A549 (cell line): ENCODE measurements at regions of chr4 and their contacts with region 1.

Region 1: GRCh38 chr4:38034986-38035882 is 75.0 kb downstream of the PTTG2 start:
- DNase-seq: peak; percentile 35 to 45
- ATAC-seq: peak in 1 of 2 experiments; percentile 54; a peak in 1 of 6 replicates
- H3K4me3 ChIP-seq: no peak overlapping the region
- H3K27ac ChIP-seq: no peak overlapping the region
- H3K4me1 ChIP-seq: no peaks in the 10 kb centered on the region
- CTCF ChIP-seq: peak; percentile 59
- EP300 ChIP-seq: no peak
- POLR2A ChIP-seq: no peak
- RAD21 ChIP-seq: peak; percentile 63 to 66

Region 2: GRCh38 chr4:37463033-37463856 is 572.0 kb before region 1 on chr4:
- CTCF ChIA-PET with region 1: no interaction called
- POLR2A ChIA-PET with region 1: no interaction called
- DNase-seq: no peak
- ATAC-seq: no peak
- H3K4me3 ChIP-seq: no peak overlapping the region
- H3K27ac ChIP-seq: no peak overlapping the region
- H3K4me1 ChIP-seq: no peaks in the 10 kb centered on the region
- CTCF ChIP-seq: no peak
- EP300 ChIP-seq: no peak
- POLR2A ChIP-seq: no peak
- RAD21 ChIP-seq: no peak

Region 3: DNA sequence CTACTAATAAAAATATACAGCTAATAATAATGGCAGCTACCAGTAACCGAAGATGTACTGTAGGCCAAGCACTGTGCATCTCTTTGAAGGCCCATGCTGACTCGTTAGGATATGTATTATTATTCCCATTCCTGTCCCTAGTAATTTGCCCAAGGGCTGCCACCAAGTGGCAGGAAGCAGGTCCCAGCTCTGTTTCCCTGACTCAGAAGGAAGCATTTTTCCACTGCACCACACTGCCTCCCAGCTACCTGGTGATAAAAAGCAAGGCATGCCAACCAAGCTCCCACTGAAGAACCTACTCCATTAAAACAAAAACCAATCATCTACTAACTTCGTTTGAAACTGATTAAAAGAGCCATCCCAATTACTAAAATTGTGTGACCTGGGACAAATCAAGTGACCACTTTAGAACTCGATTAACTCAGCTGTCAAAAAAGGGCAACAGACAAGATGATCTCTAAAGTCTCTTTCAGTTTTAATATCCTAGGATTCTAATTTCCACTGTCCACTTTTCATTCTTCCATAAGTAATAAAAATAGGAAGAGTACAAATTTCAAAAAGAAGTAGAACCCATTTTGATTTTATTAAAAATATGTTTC is 233.1 kb before region 1 on chr4:
- CTCF ChIA-PET with region 1: interaction called, 10 read pairs
- POLR2A ChIA-PET with region 1: no interaction called
- DNase-seq: peak; percentile 27 to 79
- ATAC-seq: peak; percentile 94 to 99
- H3K4me3 ChIP-seq: no peak overlapping the region
- H3K27ac ChIP-seq: no peak overlapping the region
- H3K4me1 ChIP-seq: no peaks in the 10 kb centered on the region
- CTCF ChIP-seq: peak; percentile 67
- EP300 ChIP-seq: no peak
- POLR2A ChIP-seq: no peak
- RAD21 ChIP-seq: peak; percentile 72 to 77

Region 4: GRCh38 chr4:38046728-38047489 is 11.7 kb after region 1 on chr4:
- CTCF ChIA-PET with region 1: interaction called, 11 read pairs
- POLR2A ChIA-PET with region 1: no interaction called
- DNase-seq: no peak
- ATAC-seq: no peak
- H3K4me3 ChIP-seq: no peak overlapping the region
- H3K27ac ChIP-seq: no peak overlapping the region
- H3K4me1 ChIP-seq: no peaks in the 10 kb centered on the region
- CTCF ChIP-seq: no peak
- EP300 ChIP-seq: no peak
- POLR2A ChIP-seq: no peak
- RAD21 ChIP-seq: no peak